ENCODE measurements at regions of chr19 and their contacts with region 1.

Region 1: DNA sequence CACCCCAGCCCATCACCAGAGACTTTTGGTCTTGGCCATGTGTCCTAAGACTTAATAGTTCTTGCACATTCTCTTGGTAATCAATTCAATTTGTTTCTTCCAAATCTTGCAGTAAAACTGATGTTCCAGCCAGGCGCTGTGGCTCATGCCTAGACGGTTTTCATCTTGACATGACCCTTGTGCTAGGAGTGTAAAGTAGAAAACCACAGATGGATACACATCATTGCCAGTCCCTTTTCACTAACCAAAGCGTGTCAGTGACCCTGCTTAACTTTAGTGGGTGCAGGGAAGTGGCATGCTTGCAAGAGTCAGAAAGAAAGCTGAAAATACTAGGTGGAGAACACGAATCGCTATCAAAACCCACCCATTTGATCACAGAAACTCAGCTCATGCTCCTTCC is 18.0 kb upstream of the CD70 start:
- DNase-seq: no peak
- ATAC-seq: no peak
- H3K4me3 ChIP-seq: no peak overlapping the region
- H3K27ac ChIP-seq: no peak overlapping the region
- H3K4me1 ChIP-seq: peaks cover 0 to 10% (median 0%) of the 10 kb centered on the region in 12 donors
- H3K27me3 ChIP-seq: peaks cover 0 to 40% (median 13%) of the 10 kb centered on the region in 9 donors
- CTCF ChIP-seq: no peak
- POLR2A ChIP-seq: no peak

Region 2: DNA sequence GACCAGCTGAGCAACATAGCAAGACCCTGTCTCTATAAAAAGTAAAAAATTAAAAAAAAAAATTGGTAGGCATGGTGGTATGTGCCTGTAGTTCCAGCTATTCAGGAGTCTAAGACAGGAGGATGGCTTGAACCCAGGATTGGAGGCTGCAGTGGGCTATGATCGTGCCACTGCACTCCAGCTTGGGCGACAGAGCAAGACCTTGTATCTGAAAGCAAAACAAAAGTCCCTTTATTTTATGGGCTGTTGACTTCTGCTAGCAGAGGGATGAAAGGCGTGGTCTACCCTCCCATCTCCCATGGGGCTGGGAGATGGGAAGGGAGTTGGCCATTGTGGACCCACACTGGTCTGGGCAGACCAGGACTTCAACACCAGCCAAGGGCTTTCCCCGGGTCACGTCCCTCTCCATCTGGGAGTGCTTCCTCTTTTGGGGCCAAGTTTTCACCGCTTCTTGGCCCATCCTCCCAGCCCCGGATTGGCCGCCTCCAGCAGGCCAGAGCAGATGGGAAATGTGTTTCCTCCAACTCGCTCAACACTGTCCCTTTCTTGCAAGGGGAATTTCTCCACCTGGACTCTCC is 80.3 kb before region 1 on chr19:
- intact Hi-C with region 1: loop called in 1 of 10 experiments (anchors 5 kb)
- DNase-seq: peak; percentile 60 to 84 (median 74)
- ATAC-seq: peak; percentile 55 to 79 (median 71)
- H3K4me3 ChIP-seq: no peak overlapping the region
- H3K27ac ChIP-seq: no peak overlapping the region
- H3K4me1 ChIP-seq: peaks cover 0 to 46% (median 32%) of the 10 kb centered on the region in 12 donors
- H3K27me3 ChIP-seq: peaks cover 4 to 24% (median 16%) of the 10 kb centered on the region in 9 donors
- CTCF ChIP-seq: no peak
- POLR2A ChIP-seq: no peak

Region 3: GRCh38 chr19:6540918-6541689 is 67.8 kb before region 1 on chr19:
- intact Hi-C with region 1: no loop called
- DNase-seq: no peak
- ATAC-seq: no peak
- H3K4me3 ChIP-seq: no peak overlapping the region
- H3K27ac ChIP-seq: no peak overlapping the region
- H3K4me1 ChIP-seq: peaks cover 0 to 10% (median 0%) of the 10 kb centered on the region in 12 donors
- H3K27me3 ChIP-seq: peaks cover 0 to 29% (median 0%) of the 10 kb centered on the region in 9 donors
- CTCF ChIP-seq: no peak
- POLR2A ChIP-seq: no peak

Region 4: DNA sequence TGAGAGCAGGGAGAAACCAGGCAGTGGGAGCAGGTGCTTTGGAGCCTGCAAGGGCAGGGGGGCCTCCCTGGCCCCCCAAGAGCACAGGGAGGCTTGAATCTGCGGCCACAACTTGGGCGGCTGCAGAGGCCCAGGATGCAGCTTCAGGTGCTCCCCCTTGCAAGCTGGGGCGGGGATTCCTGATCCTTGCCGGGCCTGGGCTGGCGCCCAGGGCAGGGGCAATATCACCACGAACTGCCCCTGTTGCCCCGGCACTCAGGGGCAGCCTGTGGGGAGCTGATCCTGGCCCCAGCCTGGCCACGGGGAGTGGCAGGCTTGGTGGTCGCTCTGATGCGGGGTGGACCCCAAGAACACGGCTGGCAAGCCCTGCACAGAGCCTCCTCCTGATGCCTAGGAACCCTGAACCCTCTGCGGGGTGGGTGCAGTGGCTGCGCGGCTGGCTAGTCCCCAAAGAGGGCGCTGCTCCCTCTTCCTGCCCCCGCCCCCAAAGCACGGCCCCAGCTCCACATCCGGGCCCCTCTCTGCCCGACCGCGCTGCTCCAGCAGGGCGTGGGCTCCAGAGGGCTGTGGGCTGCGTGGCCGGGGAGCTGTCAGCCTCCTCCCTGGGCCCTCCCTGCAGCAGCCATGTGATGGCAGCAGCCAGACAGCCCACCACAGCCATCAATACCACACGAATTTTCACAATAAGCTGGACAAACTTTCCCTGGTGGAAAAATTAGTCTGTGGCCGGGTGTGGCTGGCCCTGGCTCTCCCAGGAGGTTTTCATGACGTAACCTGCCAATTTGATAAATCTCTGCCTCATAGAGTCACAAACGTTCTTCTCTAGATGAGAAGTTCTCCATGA is 57.1 kb before region 1 on chr19:
- intact Hi-C with region 1: no loop called
- DNase-seq: no peak
- ATAC-seq: peak in 3 of 4 donors; percentile 32 to 56 (median 49)
- H3K4me3 ChIP-seq: no peak overlapping the region
- H3K27ac ChIP-seq: no peak overlapping the region
- H3K4me1 ChIP-seq: peaks cover 0 to 4% (median 0%) of the 10 kb centered on the region in 12 donors
- H3K27me3 ChIP-seq: peaks cover 0 to 31% (median 10%) of the 10 kb centered on the region in 9 donors
- CTCF ChIP-seq: peak in 2 of 12 donors; percentile 8 to 18
- POLR2A ChIP-seq: no peak